PC-3 (cell line): ENCODE measurements at regions of chr2 and their contacts with region 1.

Region 1: DNA sequence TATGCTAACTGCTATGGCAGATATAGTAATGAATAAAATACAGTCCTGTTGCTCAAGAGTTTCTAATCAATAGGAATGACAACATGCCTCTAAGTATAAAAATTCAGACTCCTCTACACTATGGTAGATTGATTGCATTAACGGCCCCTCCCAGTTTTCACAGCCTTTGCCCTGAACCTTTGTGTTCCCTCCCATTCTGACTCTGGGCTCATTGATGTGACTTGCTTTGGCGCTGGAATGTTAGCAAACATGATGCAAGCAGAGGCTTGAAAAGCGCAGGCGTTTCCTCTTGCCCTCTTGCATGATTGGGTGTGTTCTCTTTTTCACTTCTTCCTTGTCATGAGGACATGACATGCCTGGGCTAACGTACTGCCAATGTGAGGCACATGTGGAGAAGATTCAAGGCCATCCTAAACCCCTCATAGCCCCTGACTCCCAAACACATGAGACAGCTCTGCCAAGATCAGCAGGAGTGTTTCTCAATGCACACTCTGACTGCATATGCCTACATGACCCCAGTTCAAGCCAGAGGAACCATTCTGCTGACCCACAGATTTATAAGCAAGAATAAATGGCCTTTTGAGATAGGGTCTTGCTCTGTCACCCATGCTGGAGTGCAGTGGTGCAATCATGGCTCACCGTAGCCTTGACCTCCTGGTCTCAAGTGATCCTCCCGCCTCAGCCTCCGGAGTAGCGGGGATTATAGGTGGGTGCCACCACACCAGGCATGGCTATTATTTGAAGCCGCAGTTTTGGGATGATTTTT is 49.7 kb upstream of the CD28 start:
- DNase-seq: no peak
- ATAC-seq: no peak
- H3K4me3 ChIP-seq: no peak overlapping the region
- H3K27ac ChIP-seq: no peak overlapping the region
- H3K4me1 ChIP-seq: no peaks in the 10 kb centered on the region
- H3K27me3 ChIP-seq: no peaks in the 10 kb centered on the region
- CTCF ChIP-seq: no peak

Region 2: DNA sequence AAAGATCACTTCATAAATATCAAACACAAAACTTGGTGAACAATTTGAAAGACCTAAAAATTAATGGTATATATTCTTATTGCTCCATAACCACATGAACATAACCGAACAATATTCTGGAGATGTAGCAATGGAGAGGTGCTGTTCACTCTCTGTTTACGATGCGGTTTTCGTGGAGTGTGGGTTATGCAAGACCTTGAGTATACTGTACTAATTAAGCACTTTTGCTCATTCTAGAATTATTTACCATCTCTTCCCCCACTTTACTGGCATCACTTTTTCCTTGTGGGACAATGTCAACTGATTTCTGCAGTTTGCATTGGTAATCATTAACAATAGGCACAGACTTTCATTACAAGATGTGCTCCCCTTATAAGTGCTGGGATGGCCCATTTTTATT is 219.2 kb before region 1 on chr2:
- CTCF ChIA-PET with region 1: no interaction called
- POLR2A ChIA-PET with region 1: no interaction called
- intact Hi-C with region 1: no loop called
- DNase-seq: no peak
- ATAC-seq: no peak
- H3K4me3 ChIP-seq: no peak overlapping the region
- H3K27ac ChIP-seq: no peak overlapping the region
- H3K4me1 ChIP-seq: no peaks in the 10 kb centered on the region
- H3K27me3 ChIP-seq: no peaks in the 10 kb centered on the region
- CTCF ChIP-seq: no peak

Region 3: GRCh38 chr2:203623096-203623495 is 33.6 kb before region 1 on chr2:
- CTCF ChIA-PET with region 1: no interaction called
- POLR2A ChIA-PET with region 1: no interaction called
- intact Hi-C with region 1: no loop called
- DNase-seq: peak; percentile 38
- ATAC-seq: peak; percentile 40; the same call in 1 of the 2 replicates
- H3K4me3 ChIP-seq: no peak overlapping the region
- H3K27ac ChIP-seq: no peak overlapping the region
- H3K4me1 ChIP-seq: no peaks in the 10 kb centered on the region
- H3K27me3 ChIP-seq: no peaks in the 10 kb centered on the region
- CTCF ChIP-seq: no peak

Region 4: GRCh38 chr2:203694191-203694590 is 37.5 kb after region 1 on chr2:
- CTCF ChIA-PET with region 1: no interaction called
- POLR2A ChIA-PET with region 1: no interaction called
- intact Hi-C with region 1: loop called (anchors 1 kb)
- DNase-seq: no peak
- ATAC-seq: no peak
- H3K4me3 ChIP-seq: no peak overlapping the region
- H3K27ac ChIP-seq: no peak overlapping the region
- H3K4me1 ChIP-seq: no peaks in the 10 kb centered on the region
- H3K27me3 ChIP-seq: no peaks in the 10 kb centered on the region
- CTCF ChIP-seq: no peak